ENCODE measurements at regions of chr10 and their contacts with region 1.

Region 1: DNA sequence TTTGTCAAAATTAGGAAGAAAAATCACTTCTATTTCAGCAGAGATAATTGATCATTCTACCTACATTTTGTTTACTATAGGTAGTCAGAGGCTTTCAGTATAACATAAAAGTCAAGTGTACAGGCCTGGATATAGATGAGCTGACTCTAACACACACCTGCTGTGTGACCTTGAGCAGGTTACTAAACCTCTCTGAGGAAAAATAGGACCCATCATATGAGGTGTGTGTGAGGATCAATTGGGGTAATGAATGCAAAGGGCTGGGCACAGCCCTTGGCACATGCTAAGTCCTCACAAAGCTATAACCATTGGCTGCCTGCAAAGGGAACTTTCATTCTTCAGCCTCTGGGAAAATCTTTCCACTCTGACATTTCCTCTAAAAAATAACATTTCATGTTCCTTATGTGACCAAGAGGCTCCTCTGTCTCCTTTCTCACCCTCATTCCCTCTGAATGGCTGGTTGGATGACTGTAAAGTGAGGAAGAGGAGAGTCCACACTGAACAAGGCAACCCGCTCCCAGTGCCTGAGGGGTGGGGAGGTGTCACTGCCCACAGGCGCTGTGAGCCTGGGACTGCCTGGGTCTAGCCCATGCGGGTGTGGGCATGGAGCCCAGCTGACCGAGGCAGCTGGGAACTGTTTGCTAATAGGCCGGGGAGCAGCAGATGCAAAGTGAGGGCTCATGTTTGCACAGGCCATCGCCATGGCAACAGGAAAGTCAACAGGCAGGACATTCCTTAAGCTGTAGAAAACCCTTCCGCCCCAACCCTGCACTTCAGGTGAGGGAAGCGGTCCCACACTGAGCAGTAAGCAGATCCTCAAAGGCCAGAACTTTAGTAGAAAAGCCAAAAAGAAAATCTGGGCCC is 36.8 kb downstream of the MYOF start:
- DNase-seq: peak; percentile 95
- ATAC-seq: peak; percentile 95
- H3K4me3 ChIP-seq: no peak overlapping the region
- H3K27ac ChIP-seq: peak overlapping the region; percentile 1 to 90
- H3K4me1 ChIP-seq: no peaks in the 10 kb centered on the region
- H3K27me3 ChIP-seq: no peaks in the 10 kb centered on the region

Region 2: DNA sequence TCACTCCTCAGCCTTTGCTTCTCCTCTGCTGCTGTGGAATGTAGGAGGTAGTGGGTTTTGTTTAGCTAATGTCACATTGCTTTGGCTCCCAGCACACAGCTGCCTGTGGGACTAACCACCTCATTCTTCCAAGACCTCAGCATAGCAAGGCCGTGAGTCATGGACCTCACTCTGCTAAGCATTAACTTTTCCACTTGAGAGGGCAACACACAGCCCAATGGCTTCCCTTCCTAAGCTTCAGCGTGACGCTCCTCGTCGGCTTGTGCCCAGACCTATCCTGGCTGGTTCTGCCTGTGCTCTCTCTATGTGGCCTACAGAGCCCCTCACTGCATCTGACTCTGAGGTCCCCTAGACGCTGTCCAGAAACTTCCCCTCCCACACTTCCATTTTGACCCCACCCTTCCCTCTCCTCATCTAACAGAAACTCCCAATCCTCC is 13.5 kb after region 1 on chr10:
- intact Hi-C with region 1: loop called in 1 of 2 experiments (anchors 2 kb)
- DNase-seq: peak; percentile 91 to 92
- ATAC-seq: peak; percentile 92
- H3K4me3 ChIP-seq: no peak overlapping the region
- H3K27ac ChIP-seq: peak overlapping the region; percentile 87 to 96
- H3K4me1 ChIP-seq: peaks cover 0 to 6% of the 10 kb centered on the region in 2 donors
- H3K27me3 ChIP-seq: no peaks in the 10 kb centered on the region